Mammary epithelial cell (primary cell): ENCODE measurements at regions of chr20 and their contacts with region 1.

Region 1: GRCh38 chr20:53939572-53940359 is 130.6 kb downstream of the BCAS1 start:
- DNase-seq: peak; percentile 90
- H3K4me3 ChIP-seq: no peak overlapping the region
- H3K27ac ChIP-seq: peak overlapping the region; percentile 82
- H3K4me1 ChIP-seq: peaks cover 28% of the 10 kb centered on the region
- H3K27me3 ChIP-seq: no peaks in the 10 kb centered on the region
- CTCF ChIP-seq: peak; percentile 84 to 86

Region 2: GRCh38 chr20:53157443-53158408 is 782.0 kb before region 1 on chr20:
- CTCF ChIA-PET with region 1: no interaction called
- dilution Hi-C with region 1: no loop called
- in situ Hi-C with region 1: no loop called
- intact Hi-C with region 1: loop called (anchors 5 kb)
- DNase-seq: peak; percentile 18
- H3K4me3 ChIP-seq: no peak overlapping the region
- H3K27ac ChIP-seq: no peak overlapping the region
- H3K4me1 ChIP-seq: no peaks in the 10 kb centered on the region
- H3K27me3 ChIP-seq: no peaks in the 10 kb centered on the region
- CTCF ChIP-seq: peak; percentile 48 to 66

Region 3: DNA sequence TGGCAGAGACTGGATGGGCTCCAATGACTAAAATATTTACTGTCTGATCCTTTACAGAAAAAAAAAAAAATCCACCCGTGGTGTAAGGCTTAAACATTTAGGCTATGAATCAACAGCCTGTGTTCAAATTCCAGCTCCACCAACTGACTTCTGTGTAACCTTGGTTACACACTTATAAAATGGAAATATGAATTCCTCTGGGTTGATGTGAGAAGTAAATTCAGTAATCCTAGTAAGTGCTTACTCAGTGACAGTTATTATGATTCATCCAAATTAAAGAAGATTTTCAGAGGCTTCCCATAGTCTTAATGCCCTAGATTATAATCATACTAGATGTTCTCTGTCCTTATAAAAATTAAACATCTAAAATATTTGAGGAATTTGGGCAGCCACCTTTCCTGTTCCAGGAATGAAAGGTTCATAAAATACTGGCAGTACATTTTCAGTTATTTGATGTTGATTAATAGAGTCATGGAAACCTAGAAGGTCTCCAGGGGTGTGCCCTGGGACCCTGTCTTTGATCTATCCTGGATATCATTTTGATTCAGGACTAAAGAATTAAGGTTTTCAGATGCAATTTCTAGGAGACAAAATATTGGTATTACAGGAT is 165.9 kb before region 1 on chr20:
- CTCF ChIA-PET with region 1: interaction called, 15 read pairs
- dilution Hi-C with region 1: no loop called
- in situ Hi-C with region 1: no loop called
- intact Hi-C with region 1: no loop called
- DNase-seq: peak; percentile 94
- H3K4me3 ChIP-seq: peak overlapping the region in 1 of 3 experiments; percentile 27
- H3K27ac ChIP-seq: peak overlapping the region; percentile 100
- H3K4me1 ChIP-seq: peaks cover 25% of the 10 kb centered on the region
- H3K27me3 ChIP-seq: no peaks in the 10 kb centered on the region
- CTCF ChIP-seq: no peak

Region 4: DNA sequence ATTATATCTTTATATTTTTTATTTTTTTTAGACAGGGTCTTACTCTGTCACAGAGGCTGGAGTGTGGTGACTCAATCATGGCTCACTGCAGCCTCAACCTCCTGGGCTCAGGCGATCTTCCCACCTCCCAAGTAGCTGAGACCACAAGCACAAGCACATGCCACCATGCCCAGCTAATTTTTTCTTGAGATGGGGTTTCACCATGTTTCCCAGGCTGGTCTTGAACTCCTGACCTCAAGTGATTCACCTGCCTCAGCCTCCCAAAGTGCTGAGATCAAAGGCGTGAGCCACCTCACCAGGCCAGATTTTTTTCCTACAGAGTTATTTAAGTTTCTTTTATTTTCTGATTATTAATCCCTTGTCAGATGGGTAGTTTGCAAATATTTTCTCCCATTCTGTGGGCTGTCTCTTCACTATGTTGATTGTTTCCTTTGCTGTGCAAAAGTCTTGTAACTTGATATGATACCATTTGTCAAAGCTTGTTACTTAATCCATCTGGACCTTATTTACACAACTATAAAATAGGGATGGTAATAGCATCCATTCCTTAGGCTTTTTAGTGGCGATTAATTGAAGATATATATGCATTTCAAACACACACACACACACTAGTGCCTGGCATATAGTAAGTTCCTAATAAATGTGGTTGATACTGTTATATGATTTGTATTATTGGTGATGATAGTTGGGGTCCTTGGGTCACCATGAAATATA is 56.5 kb before region 1 on chr20:
- CTCF ChIA-PET with region 1: no interaction called
- dilution Hi-C with region 1: no loop called
- in situ Hi-C with region 1: no loop called
- intact Hi-C with region 1: no loop called
- DNase-seq: peak; percentile 71
- H3K4me3 ChIP-seq: no peak overlapping the region
- H3K27ac ChIP-seq: no peak overlapping the region
- H3K4me1 ChIP-seq: no peaks in the 10 kb centered on the region
- H3K27me3 ChIP-seq: no peaks in the 10 kb centered on the region
- CTCF ChIP-seq: no peak

Region 5: DNA sequence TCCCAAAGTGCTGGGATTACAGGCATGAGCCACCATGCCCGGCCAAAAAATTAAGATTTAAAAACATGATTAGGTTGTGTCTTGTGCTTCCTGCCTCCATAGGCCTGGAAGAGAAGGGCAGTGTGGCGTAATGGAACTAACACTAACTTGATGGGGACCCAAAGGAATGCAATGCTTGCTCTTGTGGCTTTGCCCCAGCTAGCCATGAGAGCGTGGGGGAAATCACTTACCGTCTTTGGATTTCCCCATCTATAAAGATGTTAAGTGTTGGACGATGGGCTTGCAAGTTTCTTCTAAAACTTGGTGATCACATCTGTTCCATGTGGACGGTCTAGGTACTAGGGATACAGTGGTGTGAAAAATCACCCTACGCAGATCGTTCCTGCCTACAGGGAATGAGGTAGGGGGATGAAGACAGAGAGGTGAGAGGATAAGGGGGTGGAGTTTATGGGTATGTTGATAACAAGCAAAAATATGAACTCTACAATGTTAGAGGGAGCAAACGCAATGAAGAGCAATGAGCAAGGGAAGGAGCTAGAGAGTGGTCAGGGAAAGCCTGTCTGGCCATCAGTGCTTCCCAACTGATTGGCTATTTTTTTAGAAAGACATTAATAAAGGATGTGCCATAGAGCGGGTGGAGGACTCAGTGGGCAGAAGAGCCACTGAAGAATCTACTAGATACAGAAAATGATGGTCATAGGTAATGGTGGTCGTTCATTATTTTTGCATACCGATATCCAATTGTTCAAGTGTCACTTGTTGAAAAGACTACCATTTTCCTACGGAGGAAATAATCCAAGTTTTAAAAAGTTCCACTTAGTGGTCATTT is 34.5 kb before region 1 on chr20:
- CTCF ChIA-PET with region 1: no interaction called
- dilution Hi-C with region 1: loop called (anchors 5 kb)
- in situ Hi-C with region 1: no loop called
- intact Hi-C with region 1: no loop called
- DNase-seq: no peak
- H3K4me3 ChIP-seq: no peak overlapping the region
- H3K27ac ChIP-seq: no peak overlapping the region
- H3K4me1 ChIP-seq: peaks cover 64% of the 10 kb centered on the region
- H3K27me3 ChIP-seq: no peaks in the 10 kb centered on the region
- CTCF ChIP-seq: no peak

Region 6: GRCh38 chr20:54062812-54063280 is 123.1 kb after region 1 on chr20:
- CTCF ChIA-PET with region 1: no interaction called
- dilution Hi-C with region 1: no loop called
- in situ Hi-C with region 1: loop called in 1 of 2 experiments (anchors 10 kb)
- intact Hi-C with region 1: loop called (anchors 1 kb)
- DNase-seq: peak; percentile 39
- H3K4me3 ChIP-seq: no peak overlapping the region
- H3K27ac ChIP-seq: no peak overlapping the region
- H3K4me1 ChIP-seq: peaks cover 10% of the 10 kb centered on the region
- H3K27me3 ChIP-seq: no peaks in the 10 kb centered on the region
- CTCF ChIP-seq: peak; percentile 67 to 77

Region 7: DNA sequence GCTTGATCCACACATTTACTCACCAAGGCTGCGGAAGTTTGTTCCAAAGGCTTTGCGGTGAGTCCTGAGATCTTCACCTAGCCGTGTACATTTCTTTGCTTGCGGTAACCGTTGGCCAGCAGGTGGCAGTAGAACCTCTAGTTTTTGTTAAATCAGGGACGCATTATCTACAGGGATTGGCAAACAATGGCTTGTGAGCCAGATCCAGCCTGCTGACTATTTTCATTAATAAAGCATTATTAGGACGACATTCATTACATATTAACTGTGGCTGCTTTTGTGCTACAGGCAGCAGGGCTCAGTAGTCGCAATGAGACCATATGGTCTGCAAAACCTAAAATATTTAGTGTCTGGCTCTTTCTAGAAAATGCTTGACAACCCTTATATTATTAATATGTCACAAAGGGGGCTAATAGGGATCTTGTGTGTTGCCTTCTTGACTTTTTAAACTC is 709.8 kb after region 1 on chr20:
- CTCF ChIA-PET with region 1: no interaction called
- dilution Hi-C with region 1: no loop called
- in situ Hi-C with region 1: no loop called
- intact Hi-C with region 1: loop called (anchors 5 kb)
- DNase-seq: peak; percentile 69
- H3K4me3 ChIP-seq: no peak overlapping the region
- H3K27ac ChIP-seq: no peak overlapping the region
- H3K4me1 ChIP-seq: no peaks in the 10 kb centered on the region
- H3K27me3 ChIP-seq: no peaks in the 10 kb centered on the region
- CTCF ChIP-seq: peak; percentile 76 to 80